HepG2 (cell line): ENCODE measurements at regions of chr6 and their contacts with region 1.

Region 1: DNA sequence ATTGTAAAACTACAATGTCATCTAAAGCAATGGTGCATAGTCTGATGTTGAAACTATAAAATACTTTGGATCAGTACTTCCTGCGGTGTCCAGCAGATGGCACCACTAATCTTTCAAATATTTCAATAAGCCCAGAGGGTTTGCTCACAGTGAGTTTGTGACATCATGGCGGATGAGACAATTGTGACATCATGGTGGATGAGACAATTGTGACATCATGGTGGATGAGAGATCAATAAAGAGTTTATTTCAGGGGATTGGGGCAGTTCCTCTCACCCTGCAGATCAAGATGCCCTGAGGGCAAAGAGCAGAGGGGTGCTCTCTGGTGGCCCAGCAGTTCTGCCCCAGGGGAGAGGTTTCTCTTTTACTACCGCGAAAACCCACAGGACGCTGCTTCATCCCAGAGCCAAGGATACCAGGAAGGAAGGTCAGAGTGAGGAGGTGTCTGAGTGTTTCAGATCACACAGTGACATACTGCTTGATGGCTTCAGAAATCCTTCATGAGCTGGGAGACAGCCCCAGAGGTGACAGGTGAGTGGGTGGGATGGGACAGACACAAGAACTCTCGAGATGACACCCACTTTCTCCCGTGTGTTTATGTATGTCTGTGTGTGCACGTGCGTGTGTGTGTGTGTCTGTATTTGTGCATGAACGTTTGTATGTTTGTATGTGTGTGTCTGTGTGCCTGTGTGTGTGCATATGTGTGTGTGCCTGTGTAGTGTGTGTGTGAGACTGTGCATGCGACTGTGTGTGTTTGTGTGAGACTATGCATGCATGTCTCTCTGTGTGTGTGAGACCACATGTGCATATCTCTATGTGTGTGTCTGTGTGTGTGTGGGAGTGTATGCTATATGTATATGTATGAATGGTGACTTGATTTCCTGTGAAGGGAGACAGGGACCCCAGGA is 7.3 kb upstream of the ULBP2 start:
- DNase-seq: peak; percentile 64
- ATAC-seq: peak; percentile 57
- H3K4me3 ChIP-seq: no peak overlapping the region
- H3K27ac ChIP-seq: no peak overlapping the region
- H3K4me1 ChIP-seq: peaks cover 12% of the 10 kb centered on the region
- H3K27me3 ChIP-seq: peaks cover 9 to 63% of the 10 kb centered on the region in 2 experiments
- CTCF ChIP-seq: peak; percentile 84
- EP300 ChIP-seq: no peak
- POLR2A ChIP-seq: no peak
- RAD21 ChIP-seq: peak; percentile 80

Region 2: DNA sequence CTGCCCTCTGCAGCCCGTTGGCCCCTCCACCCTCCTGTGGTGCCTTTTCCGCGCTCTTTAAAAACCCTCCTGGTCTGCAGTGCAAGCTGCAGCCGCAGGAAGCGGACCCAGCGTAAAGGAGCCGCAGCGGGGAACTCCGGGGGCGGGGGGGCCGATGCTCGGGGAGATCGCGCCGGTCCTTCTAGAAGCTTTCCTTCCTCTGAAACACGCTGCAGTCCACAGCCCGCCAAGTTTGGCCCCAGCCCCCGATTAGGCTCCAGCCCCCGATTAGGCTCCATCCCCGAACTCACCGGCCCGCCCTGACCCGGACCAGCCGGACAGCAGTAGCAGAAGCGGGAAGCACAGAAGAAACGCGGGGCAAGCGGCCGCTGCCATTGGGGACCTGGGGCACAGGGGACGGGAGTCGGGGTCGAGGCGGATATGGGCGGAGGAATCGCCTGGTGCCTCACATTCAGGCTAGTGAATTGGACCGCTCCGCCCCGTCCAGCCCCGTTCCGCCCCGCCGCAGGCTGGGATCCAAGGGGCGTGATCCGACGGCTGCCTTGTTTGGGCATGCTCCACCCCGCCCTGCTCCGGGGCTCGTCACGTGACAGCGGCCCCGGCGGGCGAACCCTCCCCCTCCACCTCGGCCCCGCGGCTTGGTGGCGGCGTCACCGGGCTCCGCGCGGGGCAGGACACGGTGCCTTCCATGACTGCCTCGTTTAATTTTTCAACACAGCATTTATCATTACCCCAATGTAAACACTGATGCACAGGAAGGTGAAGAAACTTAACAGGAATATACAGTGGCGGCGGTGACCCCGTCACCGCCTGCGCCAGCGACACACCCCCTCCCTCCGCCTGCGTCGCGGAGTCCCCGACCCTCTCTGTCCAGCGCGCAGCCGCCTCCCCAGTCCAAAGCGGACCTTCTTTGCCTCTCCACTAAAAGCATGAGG is 70.5 kb after region 1 on chr6:
- CTCF ChIA-PET with region 1: interaction called, 4 read pairs
- POLR2A ChIA-PET with region 1: no interaction called
- in situ Hi-C with region 1: loop called (anchors 5 kb)
- intact Hi-C with region 1: no loop called
- DNase-seq: peak; percentile 84
- ATAC-seq: peak; percentile 94
- H3K4me3 ChIP-seq: peak overlapping the region; percentile 59 to 78 (median 77)
- H3K27ac ChIP-seq: no peak overlapping the region
- H3K4me1 ChIP-seq: peaks cover 13% of the 10 kb centered on the region; the same call in 1 of the 2 replicates
- H3K27me3 ChIP-seq: peaks cover 5 to 35% of the 10 kb centered on the region in 2 experiments; a peak in 4 of 5 replicates
- CTCF ChIP-seq: no peak
- EP300 ChIP-seq: no peak
- POLR2A ChIP-seq: no peak
- RAD21 ChIP-seq: no peak

Region 3: GRCh38 chr6:150016324-150017185 is 82.1 kb after region 1 on chr6:
- CTCF ChIA-PET with region 1: interaction called, 64 read pairs
- POLR2A ChIA-PET with region 1: no interaction called
- in situ Hi-C with region 1: no loop called
- intact Hi-C with region 1: loop called (anchors 1 kb)
- DNase-seq: peak; percentile 69
- ATAC-seq: peak; percentile 83
- H3K4me3 ChIP-seq: no peak overlapping the region
- H3K27ac ChIP-seq: no peak overlapping the region
- H3K4me1 ChIP-seq: no peaks in the 10 kb centered on the region
- H3K27me3 ChIP-seq: peaks cover 4 to 30% of the 10 kb centered on the region in 2 experiments
- CTCF ChIP-seq: peak; percentile 81
- EP300 ChIP-seq: no peak
- POLR2A ChIP-seq: no peak
- RAD21 ChIP-seq: peak; percentile 83

Region 4: GRCh38 chr6:150025201-150025917 is 90.9 kb after region 1 on chr6 and contains the start of gene RAET1L:
- CTCF ChIA-PET with region 1: no interaction called
- POLR2A ChIA-PET with region 1: no interaction called
- in situ Hi-C with region 1: loop called (anchors 5 kb)
- intact Hi-C with region 1: no loop called
- DNase-seq: no peak
- ATAC-seq: no peak; the same call in 2 of the 3 replicates
- H3K4me3 ChIP-seq: no peak within 1 kb of the TSS
- H3K27ac ChIP-seq: no peak within 1 kb of the TSS
- H3K4me1 ChIP-seq: no peaks in the 10 kb centered on the region
- H3K27me3 ChIP-seq: peaks cover 9 to 36% of the 10 kb centered on the region in 2 experiments
- CTCF ChIP-seq: no peak
- EP300 ChIP-seq: no peak
- POLR2A ChIP-seq: no peak
- RAD21 ChIP-seq: no peak
- total RNA-seq, gene RAET1L: not detected in 2 replicates